CD8-positive, alpha-beta T cell (primary cell): ENCODE measurements at regions of chr3 and their contacts with region 1.

Region 1: DNA sequence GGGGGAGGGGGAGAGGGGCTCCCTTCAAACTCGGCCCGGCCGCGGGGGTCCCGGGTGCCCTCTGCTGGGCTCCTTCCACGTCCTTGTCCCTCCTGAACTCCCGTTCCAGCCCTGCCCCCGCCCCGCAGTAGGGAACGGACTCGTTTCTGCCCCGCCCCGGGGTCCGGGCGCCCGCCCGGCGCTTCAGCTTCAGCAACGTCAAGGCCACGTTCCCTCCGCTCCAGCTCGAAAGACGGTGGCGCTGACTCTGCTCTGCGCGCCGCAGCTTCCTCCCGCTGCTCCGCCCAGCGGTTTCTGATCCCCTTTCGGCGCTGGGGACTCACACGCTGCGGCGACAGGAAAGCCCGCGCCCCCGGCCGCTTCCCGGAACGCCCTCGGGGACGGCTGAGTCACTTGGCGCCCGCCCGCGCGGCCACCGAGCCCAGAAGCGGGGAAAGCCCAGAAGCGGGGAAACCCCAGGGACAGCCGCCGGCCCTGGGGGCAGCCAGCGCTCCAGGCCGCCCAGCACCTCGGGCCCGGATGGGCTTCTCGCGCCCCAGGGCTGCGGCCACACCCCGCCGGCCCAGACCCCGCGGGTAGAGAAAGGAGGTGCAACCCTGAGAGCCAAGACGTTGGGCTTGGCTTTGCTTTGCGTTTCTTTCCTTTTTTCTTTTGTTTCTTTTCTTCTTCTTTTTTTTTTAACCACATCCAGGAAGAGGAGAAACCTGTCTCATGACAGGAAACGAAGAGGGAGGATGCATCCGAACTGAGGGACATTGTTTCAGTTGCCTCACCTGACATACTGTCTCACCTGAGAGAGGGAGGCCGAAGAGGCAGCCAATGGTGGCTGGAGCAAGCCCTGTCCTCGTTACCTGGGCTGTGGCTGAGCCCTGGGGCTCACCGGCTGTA is 28.9 kb downstream of the ARHGAP31 start:
- DNase-seq: peak; percentile 67 to 96 (median 87)
- ATAC-seq: peak; percentile 83
- H3K4me3 ChIP-seq: peak overlapping the region; percentile 53 to 84
- H3K4me3 Mint-ChIP-seq: peak overlapping the region; percentile 92
- H3K27ac ChIP-seq: peak overlapping the region; percentile 57 to 78
- H3K27ac Mint-ChIP-seq: peak overlapping the region; percentile 96
- H3K4me1 ChIP-seq: peaks cover 13% of the 10 kb centered on the region
- H3K4me1 Mint-ChIP-seq: peaks cover 20% of the 10 kb centered on the region
- H3K27me3 ChIP-seq: no peaks in the 10 kb centered on the region
- H3K27me3 Mint-ChIP-seq: no peaks in the 10 kb centered on the region
- CTCF ChIP-seq: no peak

Region 2: GRCh38 chr3:119125742-119126503 is 197.2 kb before region 1 on chr3:
- CTCF ChIA-PET with region 1: no interaction called
- POLR2A ChIA-PET with region 1: no interaction called
- intact Hi-C with region 1: no loop called
- DNase-seq: no peak
- ATAC-seq: no peak
- H3K4me3 ChIP-seq: no peak overlapping the region
- H3K4me3 Mint-ChIP-seq: no peak overlapping the region
- H3K27ac ChIP-seq: no peak overlapping the region
- H3K27ac Mint-ChIP-seq: no peak overlapping the region
- H3K4me1 ChIP-seq: no peaks in the 10 kb centered on the region
- H3K4me1 Mint-ChIP-seq: no peaks in the 10 kb centered on the region
- H3K27me3 ChIP-seq: no peaks in the 10 kb centered on the region
- H3K27me3 Mint-ChIP-seq: peaks cover 15% of the 10 kb centered on the region
- CTCF ChIP-seq: no peak

Region 3: GRCh38 chr3:119279101-119279554 is 44.0 kb before region 1 on chr3:
- CTCF ChIA-PET with region 1: interaction called, 3 read pairs
- POLR2A ChIA-PET with region 1: no interaction called
- intact Hi-C with region 1: loop called in 1 of 2 experiments (anchors 10 kb)
- DNase-seq: no peak
- ATAC-seq: no peak
- H3K4me3 ChIP-seq: no peak overlapping the region
- H3K4me3 Mint-ChIP-seq: no peak overlapping the region
- H3K27ac ChIP-seq: no peak overlapping the region
- H3K27ac Mint-ChIP-seq: no peak overlapping the region
- H3K4me1 ChIP-seq: no peaks in the 10 kb centered on the region
- H3K4me1 Mint-ChIP-seq: peaks cover 4% of the 10 kb centered on the region
- H3K27me3 ChIP-seq: no peaks in the 10 kb centered on the region
- H3K27me3 Mint-ChIP-seq: no peaks in the 10 kb centered on the region
- CTCF ChIP-seq: no peak

Region 4: DNA sequence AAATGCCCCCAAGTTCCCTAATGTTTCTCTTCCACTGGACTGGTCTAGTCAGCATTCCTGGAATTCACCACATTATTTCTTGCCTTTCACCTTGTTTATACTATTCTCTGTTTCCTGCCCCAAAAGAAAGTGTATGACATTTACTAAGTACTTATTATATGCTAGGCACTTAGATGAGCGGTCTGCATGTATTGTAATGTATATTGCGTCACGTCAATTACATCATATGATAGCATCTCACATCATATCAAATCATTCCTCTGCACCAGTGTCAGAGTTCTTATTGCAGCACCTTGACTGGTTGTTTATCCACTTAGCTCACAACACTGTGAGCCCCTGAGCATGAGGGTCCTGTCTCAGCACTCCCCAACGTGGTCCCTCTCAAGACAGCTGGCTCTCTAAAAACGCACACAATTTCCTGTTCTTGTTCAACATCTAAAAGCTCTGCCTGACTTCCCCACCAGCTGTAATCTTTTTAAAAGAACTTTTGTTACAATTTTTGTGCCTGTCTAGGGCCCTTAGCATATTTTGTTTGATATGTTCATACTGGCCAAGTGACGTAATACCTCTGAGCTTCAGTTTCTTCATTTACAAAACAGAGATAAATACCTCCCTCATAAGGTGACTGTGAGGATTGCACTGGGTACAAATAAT is 29.9 kb after region 1 on chr3:
- CTCF ChIA-PET with region 1: interaction called, 5 read pairs
- POLR2A ChIA-PET with region 1: interaction called, 5 read pairs
- intact Hi-C with region 1: loop called (anchors 2 kb)
- DNase-seq: peak in 3 of 9 experiments; percentile 20 to 76 (median 61)
- ATAC-seq: peak; percentile 80
- H3K4me3 ChIP-seq: no peak overlapping the region
- H3K4me3 Mint-ChIP-seq: no peak overlapping the region
- H3K27ac ChIP-seq: no peak overlapping the region
- H3K27ac Mint-ChIP-seq: peak overlapping the region; percentile 8
- H3K4me1 ChIP-seq: peaks cover 20% of the 10 kb centered on the region
- H3K4me1 Mint-ChIP-seq: peaks cover 20% of the 10 kb centered on the region
- H3K27me3 ChIP-seq: no peaks in the 10 kb centered on the region
- H3K27me3 Mint-ChIP-seq: no peaks in the 10 kb centered on the region
- CTCF ChIP-seq: peak; percentile 63

Region 5: DNA sequence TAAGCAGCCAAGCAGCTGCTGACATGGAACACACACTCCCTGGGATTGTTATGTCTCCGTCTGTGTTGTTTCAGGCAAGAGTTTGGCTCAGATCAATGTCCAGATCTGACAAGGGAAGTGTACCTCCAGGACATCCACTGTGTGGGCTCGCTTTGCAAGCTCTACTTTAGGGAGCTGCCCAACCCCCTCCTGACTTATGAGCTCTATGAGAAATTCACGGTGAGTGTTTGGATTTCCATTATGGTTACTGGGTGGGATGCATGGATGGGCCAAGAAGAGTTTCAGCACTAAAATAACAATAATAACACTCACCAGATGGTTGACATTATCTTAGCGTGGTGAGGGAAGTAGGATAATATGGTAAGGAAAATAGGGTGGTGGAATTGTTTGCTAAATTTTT is 45.2 kb after region 1 on chr3:
- CTCF ChIA-PET with region 1: no interaction called
- POLR2A ChIA-PET with region 1: no interaction called
- intact Hi-C with region 1: no loop called
- DNase-seq: no peak
- ATAC-seq: no peak
- H3K4me3 ChIP-seq: no peak overlapping the region
- H3K4me3 Mint-ChIP-seq: no peak overlapping the region
- H3K27ac ChIP-seq: no peak overlapping the region
- H3K27ac Mint-ChIP-seq: no peak overlapping the region
- H3K4me1 ChIP-seq: no peaks in the 10 kb centered on the region
- H3K4me1 Mint-ChIP-seq: no peaks in the 10 kb centered on the region
- H3K27me3 ChIP-seq: no peaks in the 10 kb centered on the region
- H3K27me3 Mint-ChIP-seq: no peaks in the 10 kb centered on the region
- CTCF ChIP-seq: no peak

Region 6: DNA sequence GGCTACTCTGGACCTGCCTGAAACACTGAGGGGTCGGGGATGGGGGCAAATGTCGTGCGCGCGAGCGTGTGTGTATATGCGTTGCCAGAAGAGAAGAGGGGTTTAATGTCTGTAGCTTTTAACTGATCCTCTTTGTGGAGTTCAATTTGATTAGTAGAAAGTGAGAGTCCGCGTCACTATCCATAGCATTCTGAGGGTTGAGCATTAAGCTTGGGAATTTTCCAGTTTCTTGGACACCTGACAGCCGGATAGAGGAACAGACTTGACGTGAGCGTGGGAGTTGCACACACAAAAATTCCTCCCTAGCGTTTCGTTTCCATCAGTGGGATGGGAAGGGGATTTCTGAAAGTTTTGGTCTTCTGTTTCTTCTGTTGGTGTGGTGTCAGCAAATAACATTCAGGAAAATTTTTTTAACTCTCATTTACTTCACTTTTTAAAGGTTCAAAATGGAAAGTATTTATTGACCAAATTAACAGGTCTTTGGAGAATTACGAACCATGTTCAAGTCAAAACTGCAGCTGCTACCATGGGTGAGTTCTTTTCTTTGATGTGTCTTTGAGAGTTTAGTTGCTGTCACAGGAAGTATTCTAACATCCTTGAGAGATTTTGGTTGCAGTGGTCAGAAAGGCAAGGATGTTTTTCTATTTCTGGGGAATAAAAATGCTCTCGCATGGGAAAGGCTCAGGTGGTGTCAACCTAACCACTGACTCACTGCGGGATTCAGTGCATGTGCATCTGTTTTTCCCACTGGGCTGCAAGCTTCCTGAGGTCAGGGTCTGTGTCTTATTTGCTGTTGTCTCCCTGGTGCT is 146.5 kb after region 1 on chr3:
- CTCF ChIA-PET with region 1: no interaction called
- POLR2A ChIA-PET with region 1: interaction called, 3 read pairs
- intact Hi-C with region 1: loop called (anchors 2 to 10 kb)
- DNase-seq: peak in 3 of 9 experiments; percentile 20 to 46 (median 22)
- ATAC-seq: peak; percentile 32
- H3K4me3 ChIP-seq: peak overlapping the region; percentile 79 to 84
- H3K4me3 Mint-ChIP-seq: peak overlapping the region; percentile 91
- H3K27ac ChIP-seq: peak overlapping the region; percentile 67 to 72
- H3K27ac Mint-ChIP-seq: peak overlapping the region; percentile 88
- H3K4me1 ChIP-seq: peaks cover 21% of the 10 kb centered on the region
- H3K4me1 Mint-ChIP-seq: peaks cover 33% of the 10 kb centered on the region
- H3K27me3 ChIP-seq: no peaks in the 10 kb centered on the region
- H3K27me3 Mint-ChIP-seq: no peaks in the 10 kb centered on the region
- CTCF ChIP-seq: no peak